ENCODE measurements at regions of chr9 and their contacts with region 1.

Region 1: DNA sequence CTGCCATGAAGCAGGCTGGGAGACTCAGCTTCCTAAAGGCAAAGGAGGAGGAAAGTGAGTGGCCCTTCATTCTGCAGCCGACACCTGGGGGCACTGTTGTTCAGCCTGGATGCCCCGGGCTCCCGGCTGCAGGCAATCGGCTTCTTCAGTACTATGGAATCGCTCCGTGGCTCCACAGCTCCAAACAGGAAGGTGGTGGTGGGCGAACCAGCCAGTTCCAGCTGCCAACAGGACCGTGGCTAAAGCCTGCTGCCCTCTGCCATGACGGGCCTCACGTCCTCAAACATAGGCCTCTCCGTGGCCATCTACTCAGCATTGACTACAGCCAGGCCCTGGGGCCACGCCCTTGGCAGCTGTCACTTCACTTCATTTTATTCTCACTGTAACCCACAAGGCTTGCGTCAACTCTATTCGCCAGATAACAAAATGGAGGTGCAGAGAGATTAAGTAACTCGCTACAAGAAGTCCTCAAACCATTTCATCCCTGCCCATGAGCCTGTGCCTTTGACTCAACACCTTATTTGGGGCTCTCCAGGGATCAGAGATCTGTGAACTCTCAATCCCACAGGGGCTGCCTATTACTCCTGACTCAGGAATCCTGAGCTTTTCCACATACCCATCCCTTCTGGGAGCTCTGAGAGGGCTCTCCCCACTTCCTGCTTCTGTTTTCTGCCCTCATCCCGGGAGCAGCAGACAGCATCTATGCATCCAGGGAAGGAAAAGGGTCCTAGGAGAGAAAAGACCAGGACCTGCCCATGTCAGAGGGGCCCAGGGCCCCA is 38.0 kb downstream of the PAX5 start:
- DNase-seq: peak; percentile 60
- ATAC-seq: peak; percentile 85
- H3K4me3 Mint-ChIP-seq: no peak overlapping the region
- H3K27ac Mint-ChIP-seq: no peak overlapping the region
- H3K4me1 Mint-ChIP-seq: no peaks in the 10 kb centered on the region
- H3K27me3 Mint-ChIP-seq: peaks cover 44% of the 10 kb centered on the region

Region 2: GRCh38 chr9:36873247-36873875 is 122.8 kb before region 1 on chr9:
- CTCF ChIA-PET with region 1: interaction called, 43 read pairs
- DNase-seq: peak; percentile 75
- ATAC-seq: peak; percentile 90
- H3K4me3 Mint-ChIP-seq: no peak overlapping the region
- H3K27ac Mint-ChIP-seq: no peak overlapping the region
- H3K4me1 Mint-ChIP-seq: peaks cover 3% of the 10 kb centered on the region
- H3K27me3 Mint-ChIP-seq: peaks cover 18% of the 10 kb centered on the region

Region 3: GRCh38 chr9:37262410-37262809 is 266.3 kb after region 1 on chr9:
- CTCF ChIA-PET with region 1: no interaction called
- DNase-seq: no peak
- ATAC-seq: no peak
- H3K4me3 Mint-ChIP-seq: no peak overlapping the region
- H3K27ac Mint-ChIP-seq: no peak overlapping the region
- H3K4me1 Mint-ChIP-seq: no peaks in the 10 kb centered on the region
- H3K27me3 Mint-ChIP-seq: no peaks in the 10 kb centered on the region

Region 4: DNA sequence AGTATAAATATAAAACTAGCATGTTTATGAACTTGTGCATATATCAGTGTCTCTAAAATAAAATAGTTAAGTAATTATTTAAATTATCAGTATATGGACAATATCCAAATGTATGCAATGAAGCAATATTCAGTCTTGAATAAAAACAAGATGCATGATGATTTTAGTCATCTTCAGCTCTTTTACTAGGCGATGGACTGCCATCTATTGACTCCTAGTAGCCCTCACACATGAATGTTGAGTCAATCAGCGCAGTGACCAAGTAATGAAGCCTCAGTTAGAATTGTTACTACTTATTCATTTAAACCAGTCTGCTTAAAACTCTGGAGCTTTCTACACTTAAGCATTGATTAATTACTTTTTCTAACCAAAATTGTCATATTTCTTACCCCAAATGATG is 333.5 kb after region 1 on chr9:
- CTCF ChIA-PET with region 1: interaction called, 14 read pairs
- DNase-seq: no peak
- ATAC-seq: no peak
- H3K4me3 Mint-ChIP-seq: no peak overlapping the region
- H3K27ac Mint-ChIP-seq: no peak overlapping the region
- H3K4me1 Mint-ChIP-seq: peaks cover 10% of the 10 kb centered on the region
- H3K27me3 Mint-ChIP-seq: no peaks in the 10 kb centered on the region

Measured in activated CD8-positive, alpha-beta memory T cell treated with anti-CD3 and anti-CD28 coated beads, Interleukin-2, amount 10 ng/mL, durations not matched to agents 7 days and 5 days (primary cell).